Heart right ventricle (tissue), 16 donors: ENCODE measurements at regions of chr19 and their contacts with region 1.

Region 1: DNA sequence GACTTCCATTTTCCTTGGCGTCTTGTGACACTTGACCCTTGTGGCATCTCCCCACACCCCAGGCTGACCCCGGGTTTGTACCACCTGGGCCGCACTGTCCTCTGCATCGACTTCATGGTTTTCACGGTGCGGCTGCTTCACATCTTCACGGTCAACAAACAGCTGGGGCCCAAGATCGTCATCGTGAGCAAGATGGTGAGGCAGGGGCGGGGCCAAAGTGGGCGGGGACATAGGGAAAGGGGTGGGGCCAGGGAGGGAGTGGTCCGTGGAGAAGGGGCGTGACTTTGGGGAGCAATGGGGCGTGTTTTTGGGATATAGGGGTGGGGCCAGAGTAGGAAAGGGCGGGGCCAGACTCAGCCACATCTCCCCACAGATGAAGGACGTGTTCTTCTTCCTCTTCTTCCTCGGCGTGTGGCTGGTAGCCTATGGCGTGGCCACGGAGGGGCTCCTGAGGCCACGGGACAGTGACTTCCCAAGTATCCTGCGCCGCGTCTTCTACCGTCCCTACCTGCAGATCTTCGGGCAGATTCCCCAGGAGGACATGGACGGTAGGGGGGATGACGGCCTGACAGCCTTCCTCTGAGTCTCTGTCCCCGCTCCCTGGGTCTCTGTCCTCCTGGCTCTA is 42.8 kb downstream of the TRPM4 start:
- DNase-seq: no peak
- ATAC-seq: peak in 1 of 8 donors; percentile 23
- H3K4me3 ChIP-seq: no peak overlapping the region
- H3K27ac ChIP-seq: no peak overlapping the region
- H3K4me1 ChIP-seq: peaks cover 0 to 36% (median 5%) of the 10 kb centered on the region in 9 donors
- H3K27me3 ChIP-seq: no peaks in the 10 kb centered on the region
- CTCF ChIP-seq: no peak

Region 2: GRCh38 chr19:49097455-49098288 is 102.7 kb before region 1 on chr19:
- intact Hi-C with region 1: loop called in 9 of 10 experiments (anchors 2 to 5 kb)
- DNase-seq: peak; percentile 55 to 56
- ATAC-seq: peak; percentile 28 to 79 (median 62)
- H3K4me3 ChIP-seq: no peak overlapping the region
- H3K27ac ChIP-seq: no peak overlapping the region
- H3K4me1 ChIP-seq: peaks cover 7 to 50% (median 17%) of the 10 kb centered on the region in 9 donors
- H3K27me3 ChIP-seq: no peaks in the 10 kb centered on the region
- CTCF ChIP-seq: peak; percentile 97 to 100 (median 99)

Region 3: GRCh38 chr19:49106648-49107135 is 93.7 kb before region 1 on chr19:
- intact Hi-C with region 1: loop called in 1 of 10 experiments (anchors 5 kb)
- DNase-seq: peak in 1 of 2 donors; percentile 62
- ATAC-seq: peak in 5 of 8 donors; percentile 21 to 43 (median 38)
- H3K4me3 ChIP-seq: no peak overlapping the region
- H3K27ac ChIP-seq: no peak overlapping the region
- H3K4me1 ChIP-seq: peaks cover 5 to 21% (median 10%) of the 10 kb centered on the region in 9 donors
- H3K27me3 ChIP-seq: no peaks in the 10 kb centered on the region
- CTCF ChIP-seq: peak; percentile 49 to 83 (median 77)

Region 4: GRCh38 chr19:49148784-49149651 is 51.3 kb before region 1 on chr19:
- intact Hi-C with region 1: loop called in 3 of 10 experiments (anchors 5 kb)
- DNase-seq: peak; percentile 98 to 99
- ATAC-seq: peak; percentile 79 to 89 (median 82)
- H3K4me3 ChIP-seq: peak overlapping the region; percentile 59 to 91 (median 69)
- H3K27ac ChIP-seq: peak overlapping the region; percentile 75 to 97 (median 84)
- H3K4me1 ChIP-seq: peaks cover 12 to 62% (median 48%) of the 10 kb centered on the region in 9 donors
- H3K27me3 ChIP-seq: peaks cover 0 to 40% (median 0%) of the 10 kb centered on the region in 7 donors
- CTCF ChIP-seq: no peak

Region 5: DNA sequence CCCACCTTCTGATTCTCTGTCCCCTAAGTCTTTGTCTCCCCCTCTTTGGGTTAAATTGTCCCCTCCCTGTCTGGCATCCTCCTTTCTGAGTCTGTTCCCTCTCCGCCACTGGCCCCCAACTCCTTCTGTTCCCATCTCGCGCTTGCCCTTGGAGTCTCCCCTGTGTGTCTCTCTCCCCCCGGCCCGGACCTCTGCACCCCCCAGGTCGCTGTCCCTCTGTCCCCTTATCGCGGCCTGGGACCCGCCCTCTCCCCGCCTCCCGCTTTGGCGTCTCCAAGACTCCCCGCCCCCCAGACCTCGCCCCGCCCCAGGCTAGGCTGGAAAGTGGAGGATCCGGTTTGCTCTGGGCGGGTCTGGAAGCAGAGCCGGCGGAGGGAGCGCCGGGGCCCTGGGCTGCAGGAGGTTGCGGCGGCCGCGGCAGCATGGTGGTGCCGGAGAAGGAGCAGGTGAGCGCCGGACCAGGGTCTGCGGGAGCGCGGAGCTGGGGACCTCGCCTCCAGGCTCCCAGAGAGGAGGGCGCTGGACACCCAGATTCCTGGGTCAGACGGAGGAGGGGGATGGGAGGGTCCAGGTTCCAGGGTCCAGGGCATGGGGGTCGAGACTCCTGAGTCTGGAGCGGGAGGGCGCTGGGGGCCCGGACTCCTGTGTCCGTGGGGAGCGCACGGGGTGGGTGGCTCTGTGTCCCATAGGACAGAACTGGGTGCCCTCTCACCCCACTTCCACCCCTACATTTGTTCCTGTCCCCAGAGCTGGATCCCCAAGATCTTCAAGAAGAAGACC is 42.7 kb before region 1 on chr19 and contains the start of gene TRPM4:
- intact Hi-C with region 1: loop called in 3 of 10 experiments (anchors 5 kb)
- DNase-seq: peak; percentile 96 to 97
- ATAC-seq: peak; percentile 81 to 86 (median 84)
- H3K4me3 ChIP-seq: peak within 1 kb of the TSS; percentile 75 to 98 (median 92)
- H3K27ac ChIP-seq: peak within 1 kb of the TSS; percentile 92 to 98 (median 96)
- H3K4me1 ChIP-seq: peaks cover 6 to 41% (median 24%) of the 10 kb centered on the region in 9 donors
- H3K27me3 ChIP-seq: peaks cover 0 to 16% (median 0%) of the 10 kb centered on the region in 7 donors
- CTCF ChIP-seq: peak in 1 of 9 donors; percentile 11
- total RNA-seq, gene TRPM4: 21.7 to 38.5 (median 33.0) TPM

Region 6: DNA sequence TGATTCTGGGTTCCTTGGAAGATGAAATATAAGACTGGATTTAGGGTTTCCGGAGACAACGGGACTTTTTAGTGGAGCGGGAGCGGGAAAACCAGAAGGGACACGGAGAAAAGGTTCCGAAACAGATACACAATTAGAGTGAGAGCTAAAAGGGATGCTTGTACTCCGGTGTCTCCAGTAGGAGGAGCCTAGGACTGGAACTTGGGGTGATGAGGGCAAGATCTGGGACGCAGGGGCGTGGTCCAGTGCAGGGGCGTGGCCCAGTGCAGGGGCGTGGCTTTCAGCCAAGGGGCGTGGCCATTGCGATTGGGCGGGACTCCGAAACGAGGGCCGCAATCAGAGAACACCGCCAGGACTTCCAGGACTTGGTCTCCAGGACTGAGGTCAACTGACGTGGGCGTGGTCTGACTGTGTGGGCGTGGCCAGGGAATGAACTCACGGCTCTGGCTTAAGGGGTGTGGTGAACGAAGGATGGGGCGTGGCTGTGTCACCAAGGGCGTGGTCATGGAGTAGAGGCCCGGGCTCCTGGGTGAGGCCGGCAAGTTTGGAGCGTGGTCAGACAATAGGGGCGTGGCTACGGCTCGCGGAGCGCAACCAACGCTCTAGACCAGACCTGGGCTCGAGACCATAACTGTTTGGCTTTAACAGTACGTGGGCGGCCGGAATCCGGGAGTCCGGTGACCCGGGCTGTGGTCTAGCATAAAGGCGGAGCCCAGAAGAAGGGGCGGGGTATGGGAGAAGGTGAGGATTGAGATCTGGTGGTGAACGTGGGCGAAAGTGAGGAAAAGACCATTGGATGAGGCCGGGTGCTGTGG is 163.1 kb after region 1 on chr19 and contains the start of gene DKKL1:
- intact Hi-C with region 1: no loop called
- DNase-seq: peak; percentile 99 to 100
- ATAC-seq: peak; percentile 84 to 95 (median 91)
- H3K4me3 ChIP-seq: peak within 1 kb of the TSS; percentile 65 to 97 (median 82)
- H3K27ac ChIP-seq: peak within 1 kb of the TSS; percentile 91 to 99 (median 96)
- H3K4me1 ChIP-seq: peaks cover 0 to 25% (median 11%) of the 10 kb centered on the region in 9 donors
- H3K27me3 ChIP-seq: peaks cover 0 to 31% (median 0%) of the 10 kb centered on the region in 7 donors
- CTCF ChIP-seq: peak in 4 of 9 donors; percentile 29 to 53 (median 40)
- total RNA-seq, gene DKKL1: 0.22 to 0.54 (median 0.26) TPM in 3 of 10 donors, not detected in the others